PC-3 (cell line): ENCODE measurements at regions of chr3 and their contacts with region 1.

Region 1: DNA sequence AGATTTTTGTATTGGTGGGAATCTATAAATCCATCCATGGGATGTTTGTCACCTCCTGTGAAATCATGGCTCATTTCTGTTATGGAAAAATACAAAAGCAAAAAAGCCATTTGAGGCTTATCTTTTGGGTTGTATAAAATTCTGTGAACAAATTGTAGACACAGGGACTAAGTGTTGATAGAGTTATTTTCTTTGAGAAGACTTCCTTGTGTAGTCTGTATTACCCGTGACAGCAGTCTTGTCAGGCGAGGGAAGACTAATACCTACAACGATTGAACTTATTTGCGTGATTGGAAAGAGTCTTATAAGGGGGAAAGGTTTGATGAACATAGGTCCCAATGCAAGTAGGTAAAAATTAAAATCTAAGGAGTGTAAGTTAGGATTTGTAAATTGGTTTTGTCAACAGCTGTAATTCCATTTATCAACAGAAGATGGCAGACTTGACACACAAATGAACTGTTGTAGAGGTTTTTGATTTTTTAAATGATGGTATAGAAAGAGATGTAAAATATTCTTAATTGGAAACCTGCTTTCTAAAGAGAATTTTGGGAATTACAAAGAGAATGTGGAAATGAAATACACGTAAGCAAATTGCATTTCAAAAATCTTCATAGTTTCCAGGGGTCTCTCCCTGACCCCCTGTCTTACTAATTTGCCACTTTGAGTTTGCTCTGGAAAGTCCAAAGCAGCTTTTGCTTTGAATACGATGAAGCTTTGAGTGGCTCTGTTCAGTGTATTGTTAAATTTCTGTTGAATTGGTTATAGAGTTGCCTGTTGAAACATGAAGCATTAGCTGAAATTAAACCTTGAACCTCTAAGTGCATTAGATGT is 33.2 kb downstream of the SLC25A26 start:
- DNase-seq: peak; percentile 38
- ATAC-seq: no peak
- H3K4me3 ChIP-seq: no peak overlapping the region
- H3K27ac ChIP-seq: no peak overlapping the region
- H3K4me1 ChIP-seq: no peaks in the 10 kb centered on the region
- H3K27me3 ChIP-seq: no peaks in the 10 kb centered on the region
- CTCF ChIP-seq: peak; percentile 58

Region 2: DNA sequence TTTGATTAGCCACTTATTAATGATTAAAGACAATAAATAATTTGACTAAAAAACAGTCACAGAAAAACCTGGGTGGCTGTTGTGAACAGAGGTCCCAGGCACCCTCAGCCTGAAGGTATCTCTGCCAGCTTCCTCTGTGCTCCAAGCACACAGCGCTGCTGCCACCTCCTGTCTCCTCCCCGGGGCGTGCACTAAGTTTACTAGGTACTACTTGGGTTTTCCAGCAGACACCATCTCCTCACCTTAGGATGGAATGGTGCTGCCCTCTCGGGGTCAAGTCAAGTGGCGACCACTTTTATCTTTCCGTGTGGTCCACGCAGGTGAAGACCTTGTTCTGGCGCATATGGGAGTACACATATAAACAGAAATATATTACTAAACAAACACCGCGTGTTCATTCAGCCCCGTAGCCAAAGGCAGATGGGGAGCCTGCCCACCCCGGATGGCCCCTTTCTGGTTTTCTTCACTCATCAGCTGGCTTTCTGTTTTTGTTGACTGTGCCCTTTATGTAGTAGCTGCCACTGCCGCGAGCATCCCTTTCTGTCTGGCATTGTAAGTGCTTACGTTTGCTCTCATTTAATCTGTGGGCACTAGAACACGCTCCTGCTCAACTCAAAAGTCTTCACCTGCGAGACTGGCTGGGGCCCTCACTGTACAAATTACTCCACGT is 118.8 kb after region 1 on chr3:
- CTCF ChIA-PET with region 1: interaction called, 4 read pairs
- POLR2A ChIA-PET with region 1: no interaction called
- intact Hi-C with region 1: loop called (anchors 1 kb)
- DNase-seq: peak; percentile 28
- ATAC-seq: peak; percentile 92
- H3K4me3 ChIP-seq: no peak overlapping the region
- H3K27ac ChIP-seq: no peak overlapping the region
- H3K4me1 ChIP-seq: no peaks in the 10 kb centered on the region; the same call in 1 of the 2 replicates
- H3K27me3 ChIP-seq: no peaks in the 10 kb centered on the region
- CTCF ChIP-seq: peak; percentile 42; the same call in 1 of the 2 replicates

Region 3: DNA sequence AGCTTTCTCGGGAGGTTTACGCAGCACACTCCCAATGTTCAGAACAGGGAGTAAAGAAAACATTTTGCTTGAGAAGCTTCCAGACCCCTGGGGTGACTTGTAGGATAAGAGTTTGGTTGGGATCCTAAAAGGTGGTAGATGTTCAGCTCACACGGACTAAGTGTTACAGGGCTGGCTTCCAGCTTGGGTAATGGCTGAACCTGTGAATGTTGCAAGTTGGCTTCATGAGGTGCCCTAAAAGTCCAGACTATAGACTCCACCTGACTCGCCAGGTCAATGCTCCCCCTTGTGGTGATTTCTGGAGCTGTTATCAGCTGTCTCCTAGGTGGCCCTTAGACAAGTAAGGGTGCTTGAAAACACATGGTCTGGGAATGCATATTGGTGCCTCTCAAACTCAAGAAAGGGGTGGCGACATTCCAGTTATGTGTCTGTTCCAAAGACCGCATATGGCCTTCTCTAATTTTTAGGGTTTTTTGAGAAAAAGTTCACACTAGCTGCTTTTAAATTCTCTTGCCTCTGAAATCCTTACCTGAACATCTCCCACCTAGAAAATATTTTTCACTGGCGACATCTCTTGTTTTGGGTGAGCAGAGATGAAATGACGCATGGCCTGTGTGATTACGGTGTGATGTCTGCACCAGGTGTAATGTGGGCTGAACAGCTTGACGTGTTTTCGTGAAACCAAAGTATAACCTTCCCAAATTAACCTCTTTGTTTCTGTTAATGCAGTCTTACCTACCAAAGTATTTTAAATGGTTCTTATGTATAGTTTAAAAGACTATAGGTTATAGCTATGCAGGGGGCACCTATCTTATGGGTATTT is 568.4 kb after region 1 on chr3:
- CTCF ChIA-PET with region 1: no interaction called
- POLR2A ChIA-PET with region 1: no interaction called
- intact Hi-C with region 1: loop called (anchors 2 kb)
- DNase-seq: peak; percentile 69
- ATAC-seq: peak; percentile 68; the same call in 1 of the 2 replicates
- H3K4me3 ChIP-seq: no peak overlapping the region
- H3K27ac ChIP-seq: no peak overlapping the region
- H3K4me1 ChIP-seq: no peaks in the 10 kb centered on the region
- H3K27me3 ChIP-seq: no peaks in the 10 kb centered on the region
- CTCF ChIP-seq: peak; percentile 63